Panc1 (cell line): ENCODE measurements at regions of chr20 and their contacts with region 1.

Region 1: GRCh38 chr20:43691928-43692524 is 25.1 kb downstream of the MYBL2 start:
- DNase-seq: peak; percentile 27
- ATAC-seq: peak; percentile 84
- H3K4me3 ChIP-seq: no peak overlapping the region
- H3K27ac ChIP-seq: no peak overlapping the region
- H3K4me1 ChIP-seq: no peaks in the 10 kb centered on the region
- H3K27me3 ChIP-seq: no peaks in the 10 kb centered on the region
- CTCF ChIP-seq: no peak; the same call in 1 of the 2 replicates

Region 2: GRCh38 chr20:43541214-43541613 is 150.8 kb before region 1 on chr20:
- CTCF ChIA-PET with region 1: no interaction called
- POLR2A ChIA-PET with region 1: no interaction called
- in situ Hi-C with region 1: no loop called
- intact Hi-C with region 1: loop called (anchors 10 kb)
- DNase-seq: peak; percentile 45
- ATAC-seq: no peak
- H3K4me3 ChIP-seq: no peak overlapping the region
- H3K27ac ChIP-seq: no peak overlapping the region
- H3K4me1 ChIP-seq: no peaks in the 10 kb centered on the region
- H3K27me3 ChIP-seq: no peaks in the 10 kb centered on the region
- CTCF ChIP-seq: no peak